Sigmoid colon (tissue), 7 donors: ENCODE measurements at regions of chr2 and their contacts with region 1.

Region 1: GRCh38 chr2:197248623-197249022 is 62.0 kb downstream of the ANKRD44 start:
- DNase-seq: no peak
- H3K4me3 ChIP-seq: no peak overlapping the region
- H3K27ac ChIP-seq: no peak overlapping the region
- H3K4me1 ChIP-seq: peaks cover 0 to 52% (median 18%) of the 10 kb centered on the region in 4 donors
- H3K27me3 ChIP-seq: no peaks in the 10 kb centered on the region
- CTCF ChIP-seq: no peak
- EP300 ChIP-seq: no peak
- POLR2A ChIP-seq: no peak

Region 2: DNA sequence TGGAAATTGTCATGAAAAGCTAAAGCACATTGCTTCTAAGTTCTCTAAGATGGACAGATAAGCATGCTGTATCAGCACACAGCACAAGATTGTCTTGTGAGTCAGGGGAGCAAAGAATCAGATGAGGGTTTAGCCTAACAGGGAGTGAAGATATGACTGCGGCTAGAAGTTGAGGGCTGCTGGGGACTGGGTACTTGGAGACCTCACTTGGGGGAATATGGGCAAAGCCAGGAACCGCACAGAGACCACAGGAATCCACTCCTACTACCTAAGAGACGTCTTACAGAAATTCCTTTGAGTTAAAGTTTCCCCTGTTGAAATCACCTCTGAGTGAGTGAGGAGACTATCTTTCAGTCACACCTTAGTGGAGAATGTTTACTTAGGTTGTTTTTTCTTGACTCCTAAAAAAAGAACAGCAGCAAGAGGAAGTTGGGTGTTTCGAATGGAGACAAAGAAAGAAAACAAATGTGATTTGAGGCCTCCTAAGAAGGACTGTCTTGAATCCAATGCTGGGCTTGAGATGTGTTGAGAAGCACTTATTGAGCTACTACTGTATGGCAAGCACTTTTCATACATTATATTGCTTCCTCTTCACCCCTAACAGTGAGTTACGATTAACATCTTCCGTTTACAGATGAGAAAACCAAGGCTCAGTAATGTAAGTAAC is 38.7 kb before region 1 on chr2:
- intact Hi-C with region 1: loop called (anchors 5 kb)
- DNase-seq: no peak
- H3K4me3 ChIP-seq: no peak overlapping the region
- H3K27ac ChIP-seq: no peak overlapping the region
- H3K4me1 ChIP-seq: peaks cover 0 to 62% (median 35%) of the 10 kb centered on the region in 4 donors
- H3K27me3 ChIP-seq: no peaks in the 10 kb centered on the region
- CTCF ChIP-seq: no peak
- EP300 ChIP-seq: no peak
- POLR2A ChIP-seq: no peak

Region 3: GRCh38 chr2:197268786-197269584 is 20.4 kb after region 1 on chr2:
- intact Hi-C with region 1: no loop called
- DNase-seq: no peak
- H3K4me3 ChIP-seq: no peak overlapping the region
- H3K27ac ChIP-seq: peak overlapping the region in 3 of 4 donors; percentile 4 to 43 (median 18)
- H3K4me1 ChIP-seq: peaks cover 0 to 65% (median 61%) of the 10 kb centered on the region in 4 donors
- H3K27me3 ChIP-seq: no peaks in the 10 kb centered on the region
- CTCF ChIP-seq: no peak
- EP300 ChIP-seq: no peak
- POLR2A ChIP-seq: no peak

Region 4: DNA sequence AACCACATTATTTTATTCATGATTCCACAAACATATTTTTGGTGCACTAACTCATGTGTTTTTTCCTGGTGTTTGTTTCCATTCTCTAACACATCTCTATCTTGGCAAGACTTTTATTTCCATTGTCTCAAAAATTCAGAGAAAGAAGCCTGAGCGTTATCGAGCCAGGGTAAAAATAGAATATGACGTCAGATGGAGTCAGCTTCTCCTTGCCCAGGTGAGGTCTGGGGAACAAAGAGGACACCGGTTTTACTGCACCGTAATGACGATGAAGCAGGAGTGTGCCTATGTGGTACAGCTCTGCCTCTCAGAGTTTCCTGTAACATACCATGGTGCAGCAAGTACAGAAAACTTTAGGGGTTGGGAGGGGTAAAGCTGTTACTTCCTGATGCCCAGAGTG is 1217.3 kb after region 1 on chr2:
- intact Hi-C with region 1: no loop called
- DNase-seq: no peak
- H3K4me3 ChIP-seq: no peak overlapping the region
- H3K27ac ChIP-seq: no peak overlapping the region
- H3K4me1 ChIP-seq: no peaks in the 10 kb centered on the region
- H3K27me3 ChIP-seq: no peaks in the 10 kb centered on the region
- CTCF ChIP-seq: no peak
- EP300 ChIP-seq: no peak
- POLR2A ChIP-seq: no peak